Psoas muscle (tissue), 8 donors: ENCODE measurements at regions of chr3 and their contacts with region 1.

Region 1: GRCh38 chr3:170357176-170357919 is at the start of gene SKIL:
- DNase-seq: peak; percentile 98 to 99
- ATAC-seq: peak; percentile 85 to 88 (median 86)
- H3K4me3 ChIP-seq: peak within 1 kb of the TSS; percentile 82
- H3K27ac ChIP-seq: peak within 1 kb of the TSS; percentile 93
- H3K4me1 ChIP-seq: peaks cover 28% of the 10 kb centered on the region
- H3K27me3 ChIP-seq: no peaks in the 10 kb centered on the region
- CTCF ChIP-seq: peak; percentile 31
- total RNA-seq, gene SKIL: 30.1 to 46.6 (median 40.2) TPM

Region 2: DNA sequence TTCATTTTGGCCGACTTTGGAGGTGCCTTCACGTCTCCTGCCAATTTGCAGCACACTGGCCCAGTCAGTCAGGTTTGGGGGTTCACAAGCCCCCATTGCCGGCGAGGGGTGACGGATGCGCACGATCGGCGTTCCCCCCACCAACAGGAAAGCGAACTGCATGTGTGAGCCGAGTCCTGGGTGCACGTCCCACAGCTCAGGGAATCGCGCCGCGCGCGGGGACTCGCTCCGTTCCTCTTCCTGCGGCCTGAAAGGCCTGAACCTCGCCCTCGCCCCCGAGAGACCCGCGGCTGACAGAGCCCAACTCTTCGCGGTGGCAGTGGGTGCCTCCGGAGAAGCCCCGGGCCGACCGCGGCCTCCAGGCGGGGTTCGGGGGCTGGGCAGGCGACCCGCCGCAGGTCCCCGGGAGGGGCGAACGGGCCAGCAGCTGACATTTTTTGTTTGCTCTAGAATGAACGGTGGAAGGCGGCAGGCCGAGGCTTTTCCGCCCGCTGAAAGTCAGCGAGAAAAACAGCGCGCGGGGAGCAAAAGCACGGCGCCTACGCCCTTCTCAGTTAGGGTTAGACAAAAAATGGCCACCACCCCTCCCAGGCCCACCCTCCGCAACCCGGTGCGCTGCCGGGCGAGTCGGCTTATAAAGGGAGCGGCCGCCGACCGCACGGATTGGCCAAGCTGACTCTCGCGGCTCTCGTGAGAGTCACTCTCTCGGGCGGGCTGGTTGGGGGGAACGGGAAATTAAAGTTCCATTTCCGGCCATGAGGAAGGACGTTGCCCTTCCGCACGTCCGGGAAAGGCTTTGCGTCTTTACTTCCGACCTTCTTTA is 592.7 kb before region 1 on chr3 and contains the start of gene TERC:
- intact Hi-C with region 1: loop called in 1 of 2 experiments (anchors 10 kb)
- DNase-seq: peak; percentile 94 to 97
- ATAC-seq: peak; percentile 97 to 98 (median 98)
- H3K4me3 ChIP-seq: peak within 1 kb of the TSS; percentile 91
- H3K27ac ChIP-seq: peak within 1 kb of the TSS; percentile 96
- H3K4me1 ChIP-seq: no peaks in the 10 kb centered on the region
- H3K27me3 ChIP-seq: no peaks in the 10 kb centered on the region
- CTCF ChIP-seq: no peak
- total RNA-seq, gene TERC: 0.75 to 4.8 (median 1.5) TPM in 3 of 4 donors, not detected in the other

Region 3: DNA sequence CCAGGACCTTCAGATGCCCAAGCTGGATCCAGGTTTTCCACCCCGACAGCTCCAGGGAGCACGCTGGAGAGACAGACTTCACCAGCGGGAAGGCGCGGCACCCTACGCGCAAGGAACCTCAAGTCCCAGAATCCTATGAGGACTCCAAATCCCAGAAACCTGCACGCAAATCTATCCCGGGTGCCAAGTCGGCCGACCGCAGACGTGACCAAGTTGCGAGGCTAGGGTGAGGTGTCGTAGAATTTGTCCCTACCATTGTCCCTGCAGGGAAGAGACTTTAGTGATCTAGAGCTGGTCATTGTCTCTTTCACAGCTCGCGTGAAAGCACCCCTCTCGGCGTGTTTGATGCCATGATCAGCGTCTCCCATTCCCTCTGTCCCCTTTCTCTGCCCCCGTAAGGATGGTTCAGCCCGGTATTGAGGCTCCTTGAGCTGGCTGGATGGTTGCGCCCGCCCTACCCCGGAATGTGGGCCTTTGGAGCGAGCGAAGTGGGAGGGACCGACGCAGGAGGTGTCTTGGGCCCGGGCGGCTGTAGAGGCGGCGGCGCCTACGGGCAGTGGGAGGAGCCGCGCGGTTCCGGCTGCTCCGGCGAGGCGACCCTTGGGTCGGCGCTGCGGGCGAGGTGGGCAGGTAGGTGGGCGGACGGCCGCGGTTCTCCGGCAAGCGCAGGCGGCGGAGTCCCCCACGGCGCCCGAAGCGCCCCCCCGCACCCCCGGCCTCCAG is 135.3 kb before region 1 on chr3 and contains the start of gene PRKCI:
- intact Hi-C with region 1: loop called (anchors 5 kb)
- DNase-seq: peak; percentile 96 to 98
- ATAC-seq: peak; percentile 99 to 100 (median 99)
- H3K4me3 ChIP-seq: peak within 1 kb of the TSS; percentile 86
- H3K27ac ChIP-seq: peak within 1 kb of the TSS; percentile 87
- H3K4me1 ChIP-seq: peaks cover 4% of the 10 kb centered on the region
- H3K27me3 ChIP-seq: no peaks in the 10 kb centered on the region
- CTCF ChIP-seq: no peak
- total RNA-seq, gene PRKCI: 9.9 to 19.8 (median 14.8) TPM

Region 4: DNA sequence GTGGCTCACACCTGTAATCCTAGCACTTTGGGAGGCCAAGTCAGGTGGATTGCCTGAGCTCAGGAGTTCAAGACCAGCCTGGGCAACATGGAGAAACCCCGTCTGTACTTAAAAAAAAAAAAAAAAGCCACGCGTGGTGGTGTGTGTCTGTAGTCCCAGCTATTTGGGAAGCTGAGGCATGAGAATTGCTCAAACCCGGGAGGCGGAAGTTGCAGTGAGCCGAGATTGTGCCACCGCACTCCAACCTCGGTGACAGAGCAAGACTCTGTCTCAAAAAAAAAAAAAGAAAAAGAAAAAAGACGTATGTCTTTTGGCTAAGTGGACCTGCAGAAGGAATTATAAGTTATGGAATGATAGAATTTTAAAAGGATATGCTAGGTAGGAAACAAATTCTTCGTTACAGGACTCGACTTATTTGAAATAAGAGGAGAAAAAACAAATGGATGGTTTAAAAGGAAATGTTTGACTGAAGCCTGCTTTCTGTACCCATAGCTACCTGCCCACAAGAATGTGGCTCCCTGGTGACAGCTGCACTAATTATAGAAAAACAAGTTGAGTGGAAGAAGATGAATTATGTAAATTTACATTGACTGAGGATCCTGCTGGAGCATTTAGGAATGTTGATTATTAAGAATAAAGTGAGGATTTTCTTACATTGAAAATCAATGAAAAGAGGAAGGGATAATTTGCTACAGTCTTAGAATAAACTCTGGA is 35.9 kb before region 1 on chr3:
- intact Hi-C with region 1: loop called in 1 of 2 experiments (anchors 5 kb)
- DNase-seq: no peak
- ATAC-seq: no peak
- H3K4me3 ChIP-seq: no peak overlapping the region
- H3K27ac ChIP-seq: no peak overlapping the region
- H3K4me1 ChIP-seq: no peaks in the 10 kb centered on the region
- H3K27me3 ChIP-seq: no peaks in the 10 kb centered on the region
- CTCF ChIP-seq: no peak

Region 5: GRCh38 chr3:170418422-170419398 is 61.4 kb after region 1 on chr3 and contains the start of gene CLDN11:
- intact Hi-C with region 1: no loop called
- DNase-seq: peak; percentile 53 to 70
- ATAC-seq: peak; percentile 41 to 70 (median 54)
- H3K4me3 ChIP-seq: peak within 1 kb of the TSS; percentile 67
- H3K27ac ChIP-seq: no peak within 1 kb of the TSS
- H3K4me1 ChIP-seq: peaks cover 9% of the 10 kb centered on the region
- H3K27me3 ChIP-seq: peaks cover 0 to 38% (median 7%) of the 10 kb centered on the region in 3 donors
- CTCF ChIP-seq: no peak
- total RNA-seq, gene CLDN11: 1.5 to 3.0 (median 2.1) TPM

Region 6: DNA sequence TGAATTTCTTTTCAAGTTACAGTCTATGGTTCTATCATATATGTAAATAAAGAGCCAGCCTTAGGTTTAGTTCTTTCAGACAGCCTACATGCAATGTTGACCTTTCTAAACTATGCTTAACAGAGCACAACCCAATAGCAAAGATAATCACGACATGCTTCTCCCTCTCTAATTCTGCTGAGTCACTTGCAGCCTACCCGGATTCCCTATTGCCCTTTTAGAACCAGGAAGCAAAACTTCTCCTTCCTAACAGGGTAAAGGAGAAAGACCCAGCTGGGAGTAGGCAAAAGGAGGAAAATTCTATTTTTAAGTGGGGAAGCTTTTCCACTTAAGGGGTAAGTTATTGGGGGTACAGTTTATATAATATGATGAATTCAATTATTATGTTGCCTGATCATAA is 149.2 kb after region 1 on chr3:
- intact Hi-C with region 1: no loop called
- DNase-seq: no peak
- ATAC-seq: no peak
- H3K4me3 ChIP-seq: no peak overlapping the region
- H3K27ac ChIP-seq: no peak overlapping the region
- H3K4me1 ChIP-seq: no peaks in the 10 kb centered on the region
- H3K27me3 ChIP-seq: no peaks in the 10 kb centered on the region
- CTCF ChIP-seq: no peak